Aorta (tissue), 5 donors: ENCODE measurements at regions of chr9 and their contacts with region 1.

Region 1: GRCh38 chr9:22452415-22453010 is 5.9 kb downstream of the DMRTA1 start:
- DNase-seq: peak; percentile 54 to 74
- ATAC-seq: peak; percentile 65
- H3K4me3 ChIP-seq: no peak overlapping the region
- H3K27ac ChIP-seq: no peak overlapping the region
- H3K4me1 ChIP-seq: peaks cover 0 to 2% of the 10 kb centered on the region in 2 donors
- H3K27me3 ChIP-seq: no peaks in the 10 kb centered on the region

Region 2: GRCh38 chr9:22244141-22245011 is 208.1 kb before region 1 on chr9:
- intact Hi-C with region 1: loop called (anchors 5 kb)
- DNase-seq: no peak
- ATAC-seq: no peak
- H3K4me3 ChIP-seq: no peak overlapping the region
- H3K27ac ChIP-seq: no peak overlapping the region
- H3K4me1 ChIP-seq: no peaks in the 10 kb centered on the region
- H3K27me3 ChIP-seq: no peaks in the 10 kb centered on the region

Region 3: DNA sequence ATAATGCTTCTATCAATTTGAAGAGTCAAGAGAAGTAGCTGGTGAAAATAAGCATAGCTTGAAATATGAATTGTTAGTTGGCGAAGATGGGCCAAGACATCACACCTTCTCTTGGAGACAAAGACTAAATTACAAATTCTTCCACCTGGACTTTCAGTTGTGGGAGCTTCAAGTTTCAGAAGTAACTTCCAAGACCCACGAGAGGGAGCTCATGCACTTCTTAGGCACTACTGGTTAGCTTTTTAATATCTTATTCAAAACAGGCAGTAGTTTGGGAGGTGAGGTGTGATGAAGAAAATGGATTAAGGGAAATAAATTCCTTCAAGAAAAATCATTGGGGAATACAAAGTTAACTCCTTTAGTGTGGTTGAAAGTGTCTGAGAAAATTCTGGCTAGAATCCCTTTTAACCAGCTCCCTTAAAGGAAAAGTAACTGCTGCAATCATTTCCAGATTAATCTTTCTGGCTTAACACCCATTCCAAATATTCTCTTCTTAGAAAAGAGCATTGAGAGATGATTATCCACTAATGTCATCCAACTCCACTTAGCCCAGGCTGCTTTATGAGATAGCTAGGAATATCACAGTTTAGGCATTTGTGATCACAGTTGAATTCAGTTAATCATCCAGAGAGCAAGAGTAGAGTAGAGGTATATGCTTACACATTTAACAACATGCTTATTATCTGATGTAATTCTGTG is 145.4 kb before region 1 on chr9:
- intact Hi-C with region 1: loop called (anchors 2 to 5 kb)
- DNase-seq: no peak
- ATAC-seq: peak; percentile 66
- H3K4me3 ChIP-seq: no peak overlapping the region
- H3K27ac ChIP-seq: no peak overlapping the region
- H3K4me1 ChIP-seq: no peaks in the 10 kb centered on the region
- H3K27me3 ChIP-seq: no peaks in the 10 kb centered on the region